Right ventricle myocardium superior (tissue), 1 donor: ENCODE measurements at regions of chr7 and their contacts with region 1.

Region 1: GRCh38 chr7:44797329-44798251 is 1.1 kb downstream of the PPIA start:
- DNase-seq: peak; percentile 93
- ATAC-seq: peak; percentile 84

Region 2: GRCh38 chr7:44606450-44607254 is 190.9 kb before region 1 on chr7 and contains the start of gene OGDH:
- intact Hi-C with region 1: loop called (anchors 5 kb)
- DNase-seq: peak; percentile 100
- ATAC-seq: peak; percentile 97
- total RNA-seq, gene OGDH: 664 TPM